Activated CD8-positive, alpha-beta T cell treated with anti-CD3 and anti-CD28 coated beads for 36 hours (primary cell): ENCODE measurements at regions of chr12 and their contacts with region 1.

Region 1: DNA sequence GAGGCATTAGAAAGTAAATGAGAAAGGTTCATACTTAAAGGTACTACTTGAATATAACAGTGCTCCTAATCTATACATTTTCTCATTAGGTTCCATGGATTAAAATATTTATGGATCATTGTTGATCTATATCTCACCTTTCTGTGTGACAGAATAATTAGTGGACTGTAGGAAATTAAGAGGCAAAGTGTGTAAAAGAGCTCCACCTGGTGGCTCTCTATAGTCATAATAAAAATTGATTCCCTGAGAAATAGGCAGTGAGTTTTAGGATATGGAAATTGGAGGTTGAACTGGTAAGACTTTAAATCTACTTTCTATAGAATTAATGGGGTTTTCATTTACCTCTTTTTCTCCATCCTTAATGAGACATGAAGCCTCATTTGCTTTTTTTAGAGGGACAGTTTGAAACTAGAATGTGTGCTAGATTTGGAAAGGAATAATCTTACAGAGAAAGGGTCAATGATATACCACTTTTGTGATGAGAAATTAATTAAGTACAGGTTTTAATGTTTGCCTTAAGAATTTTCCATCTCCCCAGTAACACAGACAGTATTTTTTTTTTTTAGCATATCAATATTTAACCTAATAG is 11.8 kb upstream of the DERA start:
- DNase-seq: no peak
- ATAC-seq: peak; percentile 64
- H3K4me3 Mint-ChIP-seq: no peak overlapping the region
- H3K27ac Mint-ChIP-seq: no peak overlapping the region
- H3K4me1 Mint-ChIP-seq: peaks cover 5% of the 10 kb centered on the region
- H3K27me3 Mint-ChIP-seq: no peaks in the 10 kb centered on the region
- CTCF ChIP-seq: peak; percentile 88

Region 2: DNA sequence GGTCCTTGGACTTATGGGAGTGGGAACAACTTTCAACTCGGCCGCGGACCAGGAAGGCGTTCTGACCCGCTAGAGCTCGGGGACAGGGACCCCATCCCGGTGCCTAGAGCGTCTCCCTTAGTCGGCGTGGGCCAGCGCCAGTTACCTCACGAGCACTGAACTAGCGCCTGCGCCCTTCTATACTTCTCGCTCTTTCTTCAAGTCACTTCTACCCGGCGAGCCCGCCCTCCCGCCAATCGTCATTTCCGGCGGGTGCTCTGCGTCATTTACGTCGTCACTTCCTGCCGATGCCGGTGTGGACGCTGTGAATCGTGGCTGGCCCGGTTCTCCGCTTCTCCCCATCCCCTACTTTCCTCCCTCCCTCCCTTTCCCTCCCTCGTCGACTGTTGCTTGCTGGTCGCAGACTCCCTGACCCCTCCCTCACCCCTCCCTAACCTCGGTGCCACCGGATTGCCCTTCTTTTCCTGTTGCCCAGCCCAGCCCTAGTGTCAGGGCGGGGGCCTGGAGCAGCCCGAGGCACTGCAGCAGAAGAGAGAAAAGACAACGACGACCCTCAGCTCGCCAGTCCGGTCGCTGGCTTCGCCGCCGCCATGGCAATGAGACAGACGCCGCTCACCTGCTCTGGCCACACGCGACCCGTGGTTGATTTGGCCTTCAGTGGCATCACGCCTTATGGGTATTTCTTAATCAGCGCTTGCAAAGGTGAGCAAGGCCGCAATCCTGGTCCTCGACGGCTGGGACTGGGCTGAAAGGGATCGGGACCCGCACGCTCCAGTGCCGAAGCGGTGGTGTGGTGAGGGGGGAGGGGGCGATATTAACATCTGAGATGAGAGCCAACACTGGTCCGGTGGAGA is 17.0 kb before region 1 on chr12 and contains the start of gene STRAP:
- CTCF ChIA-PET with region 1: interaction called, 22 read pairs
- POLR2A ChIA-PET with region 1: interaction called, 4 read pairs
- intact Hi-C with region 1: no loop called
- DNase-seq: peak; percentile 96
- ATAC-seq: peak; percentile 97
- H3K4me3 Mint-ChIP-seq: peak within 1 kb of the TSS; percentile 96
- H3K27ac Mint-ChIP-seq: peak within 1 kb of the TSS; percentile 98
- H3K4me1 Mint-ChIP-seq: peaks cover 41% of the 10 kb centered on the region
- H3K27me3 Mint-ChIP-seq: no peaks in the 10 kb centered on the region
- CTCF ChIP-seq: no peak
- total RNA-seq, gene STRAP: 138 to 140 TPM

Region 3: DNA sequence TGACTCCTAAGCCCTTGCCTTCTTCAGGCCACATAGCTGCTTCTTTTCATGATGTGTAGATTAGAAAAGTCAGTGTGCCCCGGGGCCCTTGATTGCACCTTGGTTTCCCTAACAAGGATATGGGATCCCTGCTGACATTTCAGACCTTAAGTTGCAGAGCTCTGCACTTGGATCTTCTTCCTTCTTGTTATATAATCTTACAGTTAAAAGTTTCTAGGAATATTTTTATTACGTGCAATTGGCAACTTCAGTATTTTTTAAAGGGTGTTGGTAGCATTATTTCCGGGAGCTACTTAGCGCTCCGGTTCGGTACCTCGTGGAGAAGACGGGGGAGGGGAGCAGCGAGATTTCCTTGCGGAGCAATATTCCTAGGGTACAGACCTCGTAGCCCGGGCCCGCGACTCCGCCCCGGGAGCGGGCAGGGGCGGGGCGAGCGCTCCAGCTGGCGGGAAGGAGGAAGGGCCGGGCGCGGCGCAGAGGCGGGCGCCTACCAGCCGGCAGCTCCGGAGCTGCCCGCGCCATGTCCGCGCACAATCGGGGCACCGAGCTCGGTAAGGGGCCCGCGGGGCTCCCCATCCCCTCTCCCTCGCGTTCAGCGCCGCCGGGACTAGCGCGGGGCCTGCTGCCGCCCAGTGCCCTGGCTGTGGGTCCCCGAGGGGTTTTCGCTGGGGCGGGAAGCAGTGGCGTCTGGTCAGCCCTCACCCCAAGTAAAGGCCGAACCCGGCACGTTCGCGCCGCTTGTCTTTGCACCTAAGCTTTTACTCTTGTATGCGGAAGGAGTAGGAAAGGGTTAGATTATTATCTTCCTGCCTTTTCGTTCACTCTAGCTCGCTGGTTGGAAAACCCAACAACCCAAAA is 11.7 kb after region 1 on chr12 and contains the start of gene DERA:
- CTCF ChIA-PET with region 1: interaction called, 25 read pairs
- POLR2A ChIA-PET with region 1: interaction called, 9 read pairs
- intact Hi-C with region 1: no loop called
- DNase-seq: peak; percentile 57
- ATAC-seq: peak; percentile 89
- H3K4me3 Mint-ChIP-seq: peak within 1 kb of the TSS; percentile 80
- H3K27ac Mint-ChIP-seq: peak within 1 kb of the TSS; percentile 83
- H3K4me1 Mint-ChIP-seq: peaks cover 9% of the 10 kb centered on the region
- H3K27me3 Mint-ChIP-seq: no peaks in the 10 kb centered on the region
- CTCF ChIP-seq: no peak
- total RNA-seq, gene DERA: 24.5 to 28.3 TPM

Region 4: DNA sequence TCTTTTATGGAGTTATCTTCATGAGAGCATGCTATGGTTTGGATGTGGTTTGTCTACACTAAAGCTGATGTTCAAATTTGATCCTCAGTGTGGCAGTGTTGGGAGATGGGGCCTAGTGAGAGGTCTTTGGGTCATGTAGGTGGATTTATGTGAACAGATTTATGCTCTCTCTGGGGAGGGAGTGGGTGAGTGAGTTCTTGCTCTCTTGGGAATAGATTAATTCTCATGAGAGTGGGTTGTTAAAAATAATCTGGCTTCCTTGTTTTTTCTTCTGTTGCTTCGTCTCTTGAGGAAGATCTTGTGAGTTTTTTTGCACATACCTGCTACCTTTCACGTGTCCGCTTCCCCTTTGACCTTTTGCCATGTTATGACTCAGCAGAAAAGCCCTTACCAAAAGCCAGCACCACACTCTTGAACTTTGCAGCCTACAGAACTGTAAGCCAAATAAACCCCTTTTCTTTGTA is 32.2 kb after region 1 on chr12:
- CTCF ChIA-PET with region 1: no interaction called
- POLR2A ChIA-PET with region 1: no interaction called
- intact Hi-C with region 1: no loop called
- DNase-seq: no peak
- ATAC-seq: no peak
- H3K4me3 Mint-ChIP-seq: no peak overlapping the region
- H3K27ac Mint-ChIP-seq: no peak overlapping the region
- H3K4me1 Mint-ChIP-seq: peaks cover 13% of the 10 kb centered on the region
- H3K27me3 Mint-ChIP-seq: no peaks in the 10 kb centered on the region
- CTCF ChIP-seq: no peak